PC-9 (cell line): ENCODE measurements at regions of chr19 and their contacts with region 1.

Region 1: DNA sequence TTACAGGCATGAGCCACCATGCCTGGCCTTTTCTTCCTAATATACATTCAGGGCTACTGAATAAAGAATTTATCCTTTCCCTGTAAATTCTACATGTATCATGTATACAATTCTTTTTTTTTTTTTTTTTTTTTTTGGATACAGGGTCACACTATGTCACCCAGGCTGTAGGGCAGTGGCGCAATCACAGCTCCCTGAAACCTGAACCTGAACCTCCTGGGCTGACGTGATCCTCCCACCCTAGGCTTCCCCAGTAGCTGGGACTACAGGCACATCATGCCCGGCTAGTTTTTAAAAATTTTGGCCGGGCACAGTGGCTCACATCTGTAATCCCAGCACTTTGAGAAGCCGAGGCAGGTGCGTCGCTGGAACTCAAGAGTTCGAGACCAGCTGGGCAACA is 6.5 kb upstream of the SLC44A2 start:
- DNase-seq: peak; percentile 80 to 91
- H3K4me3 ChIP-seq: peak overlapping the region; percentile 21; the same call in 1 of the 2 replicates
- H3K27ac ChIP-seq: peak overlapping the region; percentile 99
- H3K4me1 ChIP-seq: peaks cover 69% of the 10 kb centered on the region
- H3K27me3 ChIP-seq: no peaks in the 10 kb centered on the region
- CTCF ChIP-seq: no peak

Region 2: DNA sequence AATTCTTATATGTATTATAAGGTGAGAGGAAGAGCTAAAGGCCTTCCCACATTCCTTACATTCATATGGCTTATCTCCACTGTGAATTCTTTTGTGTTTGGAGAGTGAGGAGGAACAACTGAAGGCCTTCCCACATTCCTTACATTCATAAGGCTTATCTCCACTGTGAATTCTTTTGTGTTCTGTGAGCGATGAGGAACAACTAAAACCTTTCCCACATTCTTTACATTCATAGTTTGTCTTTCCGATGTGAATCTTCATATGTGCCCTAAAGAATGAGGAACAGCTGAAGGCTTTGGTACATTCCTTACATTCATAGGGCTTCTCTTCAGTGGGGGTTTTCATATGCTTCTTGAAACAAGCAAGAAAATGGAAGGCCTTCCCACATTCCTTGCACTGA is 1322.5 kb before region 1 on chr19:
- CTCF ChIA-PET with region 1: interaction called, 15 read pairs
- POLR2A ChIA-PET with region 1: no interaction called
- intact Hi-C with region 1: no loop called
- DNase-seq: no peak
- H3K4me3 ChIP-seq: no peak overlapping the region
- H3K27ac ChIP-seq: no peak overlapping the region
- H3K4me1 ChIP-seq: no peaks in the 10 kb centered on the region
- H3K27me3 ChIP-seq: no peaks in the 10 kb centered on the region
- CTCF ChIP-seq: no peak

Region 3: DNA sequence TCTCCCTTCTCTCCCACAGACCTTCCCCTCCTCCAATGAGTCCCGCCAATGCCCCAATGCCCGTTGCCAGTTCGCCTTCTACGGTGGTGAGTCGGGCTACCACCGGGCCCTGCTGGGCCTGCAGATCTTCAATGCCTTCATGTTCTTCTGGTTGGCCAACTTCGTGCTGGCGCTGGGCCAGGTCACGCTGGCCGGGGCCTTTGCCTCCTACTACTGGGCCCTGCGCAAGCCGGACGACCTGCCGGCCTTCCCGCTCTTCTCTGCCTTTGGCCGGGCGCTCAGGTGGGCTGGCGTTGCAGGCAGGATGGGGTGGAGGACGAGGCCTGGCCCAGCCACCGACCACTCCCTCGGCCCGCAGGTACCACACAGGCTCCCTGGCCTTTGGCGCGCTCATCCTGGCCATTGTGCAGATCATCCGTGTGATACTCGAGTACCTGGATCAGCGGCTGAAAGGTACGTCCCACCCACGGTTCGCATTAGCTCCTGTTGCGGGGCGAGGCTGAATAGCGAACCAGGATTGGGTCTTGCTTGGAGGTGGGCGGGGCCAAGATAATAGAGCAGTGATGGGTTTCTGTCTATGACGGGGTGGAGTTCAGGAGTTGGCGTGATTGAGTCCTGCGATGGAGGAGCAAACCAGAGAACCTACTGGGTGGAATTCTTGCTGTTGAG is 17.6 kb after region 1 on chr19:
- CTCF ChIA-PET with region 1: no interaction called
- POLR2A ChIA-PET with region 1: no interaction called
- intact Hi-C with region 1: no loop called
- DNase-seq: no peak
- H3K4me3 ChIP-seq: no peak overlapping the region
- H3K27ac ChIP-seq: no peak overlapping the region
- H3K4me1 ChIP-seq: no peaks in the 10 kb centered on the region
- H3K27me3 ChIP-seq: no peaks in the 10 kb centered on the region
- CTCF ChIP-seq: no peak